Activated CD8-positive, alpha-beta memory T cell treated with anti-CD3 and anti-CD28 coated beads, Interleukin-2, amount 10 ng/mL, durations not matched to agents 7 days and 5 days (primary cell): ENCODE measurements at regions of chr2 and their contacts with region 1.

Region 1: DNA sequence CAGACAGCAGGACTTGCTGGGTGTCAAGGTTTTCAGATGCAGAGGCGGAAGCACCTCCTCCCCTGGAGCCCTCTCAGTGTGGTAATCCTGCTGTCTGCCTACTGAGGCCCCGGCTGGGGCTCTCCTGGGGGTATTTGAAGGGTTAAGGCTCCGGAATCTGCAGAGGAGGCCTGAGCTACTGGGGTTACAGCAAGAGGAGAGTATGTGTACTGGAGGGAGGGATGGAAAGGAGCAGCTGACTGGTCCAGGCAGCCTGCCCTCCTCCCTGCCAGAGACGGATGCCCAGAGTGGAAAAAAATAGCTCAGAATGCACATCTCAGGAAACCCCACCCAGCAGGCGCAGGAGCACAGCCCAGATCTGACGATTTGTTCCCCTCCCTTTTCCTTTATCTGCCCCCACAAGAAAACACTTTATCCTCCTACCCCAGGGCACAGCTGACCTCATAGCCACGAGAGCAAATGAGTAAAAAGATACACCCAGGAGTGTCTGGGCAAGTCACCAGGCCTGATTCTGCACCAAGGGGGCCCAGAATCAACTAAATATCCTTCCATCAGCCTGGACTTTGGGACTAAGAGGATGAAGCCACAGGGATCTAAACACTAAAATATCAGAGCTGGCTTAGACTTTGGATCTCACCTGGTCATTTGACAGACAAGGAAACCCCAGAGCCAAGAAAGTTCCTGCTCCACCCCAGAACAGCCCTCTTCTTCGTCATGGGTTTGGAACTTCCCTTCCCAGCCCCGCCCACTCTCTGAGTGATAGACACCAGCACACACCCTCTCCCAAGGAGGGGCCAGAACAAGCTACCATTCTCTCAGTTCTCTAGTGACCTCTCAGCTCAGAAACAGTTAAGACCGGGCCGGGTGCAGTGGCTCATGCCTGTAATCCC is 5.5 kb downstream of the TMBIM1 start:
- DNase-seq: peak; percentile 91
- ATAC-seq: peak; percentile 76
- H3K4me3 Mint-ChIP-seq: peak overlapping the region; percentile 86
- H3K27ac Mint-ChIP-seq: peak overlapping the region; percentile 98
- H3K4me1 Mint-ChIP-seq: peaks cover 77% of the 10 kb centered on the region
- H3K27me3 Mint-ChIP-seq: no peaks in the 10 kb centered on the region

Region 2: GRCh38 chr2:218245214-218245613 is 41.6 kb before region 1 on chr2:
- CTCF ChIA-PET with region 1: no interaction called
- DNase-seq: no peak
- ATAC-seq: no peak
- H3K4me3 Mint-ChIP-seq: no peak overlapping the region
- H3K27ac Mint-ChIP-seq: no peak overlapping the region
- H3K4me1 Mint-ChIP-seq: peaks cover 28% of the 10 kb centered on the region
- H3K27me3 Mint-ChIP-seq: no peaks in the 10 kb centered on the region

Region 3: GRCh38 chr2:218301176-218301819 is 14.5 kb after region 1 on chr2:
- CTCF ChIA-PET with region 1: interaction called, 18 read pairs
- DNase-seq: peak; percentile 94
- ATAC-seq: peak; percentile 96
- H3K4me3 Mint-ChIP-seq: no peak overlapping the region
- H3K27ac Mint-ChIP-seq: peak overlapping the region; percentile 76
- H3K4me1 Mint-ChIP-seq: peaks cover 8% of the 10 kb centered on the region
- H3K27me3 Mint-ChIP-seq: no peaks in the 10 kb centered on the region